K562 (cell line): ENCODE measurements at regions of chr10 and their contacts with region 1.

Region 1: GRCh38 chr10:102399217-102400089 is 3.9 kb downstream of the NFKB2 start:
- DNase-seq: peak; percentile 77 to 90 (median 80)
- ATAC-seq: peak; percentile 82
- H3K4me3 ChIP-seq: peak overlapping the region; percentile 44
- H3K27ac ChIP-seq: peak overlapping the region; percentile 19; the same call in 2 of the 3 replicates
- H3K4me1 ChIP-seq: peaks cover 17 to 62% of the 10 kb centered on the region in 2 experiments; a peak in 4 of 5 replicates
- H3K27me3 ChIP-seq: no peaks in the 10 kb centered on the region
- CTCF ChIP-seq: peak; percentile 85 to 94 (median 85)
- EP300 ChIP-seq: no peak
- POLR2A ChIP-seq: no peak; the same call in 1 of the 2 replicates
- RAD21 ChIP-seq: peak; percentile 62 to 74

Region 2: GRCh38 chr10:102167861-102168260 is 231.6 kb before region 1 on chr10:
- CTCF ChIA-PET with region 1: interaction called, 4 read pairs
- POLR2A ChIA-PET with region 1: interaction called, 3 read pairs
- in situ Hi-C with region 1: no loop called
- intact Hi-C with region 1: loop called (anchors 5 kb)
- DNase-seq: no peak
- ATAC-seq: no peak
- H3K4me3 ChIP-seq: no peak overlapping the region
- H3K27ac ChIP-seq: no peak overlapping the region
- H3K4me1 ChIP-seq: peaks cover 6 to 10% of the 10 kb centered on the region in 2 experiments; a peak in 4 of 5 replicates
- H3K27me3 ChIP-seq: no peaks in the 10 kb centered on the region
- CTCF ChIP-seq: no peak
- EP300 ChIP-seq: no peak
- POLR2A ChIP-seq: no peak
- RAD21 ChIP-seq: no peak

Region 3: GRCh38 chr10:102231357-102232318 is 167.8 kb before region 1 on chr10:
- CTCF ChIA-PET with region 1: interaction called, 12 read pairs
- POLR2A ChIA-PET with region 1: interaction called, 4 read pairs
- in situ Hi-C with region 1: no loop called
- intact Hi-C with region 1: loop called (anchors 1 kb)
- DNase-seq: peak; percentile 67 to 83 (median 73)
- ATAC-seq: peak; percentile 83
- H3K4me3 ChIP-seq: peak overlapping the region; percentile 43
- H3K27ac ChIP-seq: no peak overlapping the region
- H3K4me1 ChIP-seq: peaks cover 4 to 24% of the 10 kb centered on the region in 2 experiments; a peak in 4 of 5 replicates
- H3K27me3 ChIP-seq: peaks cover 0 to 5% of the 10 kb centered on the region in 2 experiments; a peak in 1 of 5 replicates
- CTCF ChIP-seq: peak; percentile 74 to 86 (median 79)
- EP300 ChIP-seq: no peak
- POLR2A ChIP-seq: no peak
- RAD21 ChIP-seq: peak; percentile 37 to 71

Region 4: GRCh38 chr10:102358712-102359382 is 40.6 kb before region 1 on chr10:
- CTCF ChIA-PET with region 1: no interaction called
- POLR2A ChIA-PET with region 1: no interaction called
- in situ Hi-C with region 1: no loop called
- intact Hi-C with region 1: no loop called
- DNase-seq: no peak
- ATAC-seq: no peak
- H3K4me3 ChIP-seq: no peak overlapping the region
- H3K27ac ChIP-seq: no peak overlapping the region
- H3K4me1 ChIP-seq: no peaks in the 10 kb centered on the region
- H3K27me3 ChIP-seq: no peaks in the 10 kb centered on the region
- CTCF ChIP-seq: no peak
- EP300 ChIP-seq: no peak
- POLR2A ChIP-seq: no peak
- RAD21 ChIP-seq: no peak

Region 5: GRCh38 chr10:102565793-102566192 is 166.3 kb after region 1 on chr10:
- CTCF ChIA-PET with region 1: no interaction called
- POLR2A ChIA-PET with region 1: no interaction called
- in situ Hi-C with region 1: no loop called
- intact Hi-C with region 1: no loop called
- DNase-seq: no peak
- ATAC-seq: no peak
- H3K4me3 ChIP-seq: no peak overlapping the region
- H3K27ac ChIP-seq: no peak overlapping the region
- H3K4me1 ChIP-seq: no peaks in the 10 kb centered on the region; a peak in 1 of 5 replicates
- H3K27me3 ChIP-seq: no peaks in the 10 kb centered on the region
- CTCF ChIP-seq: no peak
- EP300 ChIP-seq: no peak
- POLR2A ChIP-seq: no peak
- RAD21 ChIP-seq: no peak